Posterior vena cava (tissue), 2 donors: ENCODE measurements at regions of chrX and their contacts with region 1.

Region 1: GRCh38 chrX:74421036-74421739 is at the start of gene SLC16A2:
- DNase-seq: peak; percentile 87
- total RNA-seq, gene SLC16A2: 11.9 to 18.4 TPM

Region 2: GRCh38 chrX:74382613-74383012 is 38.6 kb before region 1 on chrX:
- intact Hi-C with region 1: no loop called
- DNase-seq: no peak

Region 3: GRCh38 chrX:74536152-74536831 is 115.1 kb after region 1 on chrX:
- intact Hi-C with region 1: loop called (anchors 10 kb)
- DNase-seq: peak; percentile 96